Caco-2 (cell line): ENCODE measurements at regions of chr11 and their contacts with region 1.

Region 1: DNA sequence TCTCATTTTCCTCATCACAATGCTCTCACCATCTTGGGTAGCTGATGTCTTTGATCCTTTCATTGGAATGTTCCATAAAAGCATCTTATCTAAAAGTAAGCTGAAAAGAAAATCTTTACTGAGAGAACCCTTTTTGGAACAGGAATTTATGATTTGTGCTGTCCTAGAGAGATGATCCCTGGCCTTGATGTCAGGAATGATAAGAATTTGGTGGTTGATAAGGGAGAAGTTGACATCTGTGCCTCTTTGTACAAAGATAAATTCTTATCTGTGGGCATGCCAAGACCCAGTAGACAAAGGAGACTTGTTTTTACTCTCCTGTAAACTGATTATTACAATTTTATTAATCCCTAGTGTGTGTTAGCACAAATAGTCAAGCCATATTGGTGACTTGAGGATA is 36.9 kb downstream of the NAALAD2 start:
- DNase-seq: peak; percentile 83 to 90
- H3K4me3 ChIP-seq: no peak overlapping the region
- H3K4me3 Mint-ChIP-seq: peak overlapping the region; percentile 30
- H3K27ac Mint-ChIP-seq: peak overlapping the region; percentile 91
- H3K4me1 ChIP-seq: peaks cover 72% of the 10 kb centered on the region
- H3K4me1 Mint-ChIP-seq: peaks cover 28% of the 10 kb centered on the region
- H3K27me3 ChIP-seq: no peaks in the 10 kb centered on the region
- H3K27me3 Mint-ChIP-seq: no peaks in the 10 kb centered on the region
- CTCF ChIP-seq: no peak

Region 2: GRCh38 chr11:90192869-90193582 is 21.7 kb after region 1 on chr11:
- CTCF ChIA-PET with region 1: interaction called, 4 read pairs
- POLR2A ChIA-PET with region 1: no interaction called
- intact Hi-C with region 1: loop called (anchors 1 kb)
- DNase-seq: no peak
- H3K4me3 ChIP-seq: no peak overlapping the region
- H3K4me3 Mint-ChIP-seq: no peak overlapping the region
- H3K27ac Mint-ChIP-seq: no peak overlapping the region
- H3K4me1 ChIP-seq: peaks cover 26% of the 10 kb centered on the region
- H3K4me1 Mint-ChIP-seq: peaks cover 33% of the 10 kb centered on the region
- H3K27me3 ChIP-seq: no peaks in the 10 kb centered on the region
- H3K27me3 Mint-ChIP-seq: no peaks in the 10 kb centered on the region
- CTCF ChIP-seq: no peak

Region 3: GRCh38 chr11:90447618-90448017 is 276.3 kb after region 1 on chr11:
- CTCF ChIA-PET with region 1: no interaction called
- POLR2A ChIA-PET with region 1: no interaction called
- intact Hi-C with region 1: loop called (anchors 2 kb)
- DNase-seq: no peak
- H3K4me3 ChIP-seq: no peak overlapping the region
- H3K4me3 Mint-ChIP-seq: no peak overlapping the region
- H3K27ac Mint-ChIP-seq: peak overlapping the region; percentile 64
- H3K4me1 ChIP-seq: peaks cover 52% of the 10 kb centered on the region
- H3K4me1 Mint-ChIP-seq: peaks cover 47% of the 10 kb centered on the region
- H3K27me3 ChIP-seq: no peaks in the 10 kb centered on the region
- H3K27me3 Mint-ChIP-seq: no peaks in the 10 kb centered on the region
- CTCF ChIP-seq: no peak